ENCODE measurements at regions of chr18 and their contacts with region 1.

Region 1: GRCh38 chr18:58493516-58494253 is 135.2 kb downstream of the ALPK2 start:
- DNase-seq: peak; percentile 48 to 83 (median 58)
- ATAC-seq: peak; percentile 96
- H3K4me3 ChIP-seq: no peak overlapping the region
- H3K4me3 Mint-ChIP-seq: no peak overlapping the region
- H3K27ac ChIP-seq: no peak overlapping the region
- H3K27ac Mint-ChIP-seq: no peak overlapping the region
- H3K4me1 ChIP-seq: peaks cover 6% of the 10 kb centered on the region
- H3K4me1 Mint-ChIP-seq: peaks cover 7% of the 10 kb centered on the region
- H3K27me3 ChIP-seq: peaks cover 2 to 6% of the 10 kb centered on the region in 2 experiments
- H3K27me3 Mint-ChIP-seq: peaks cover 38% of the 10 kb centered on the region
- CTCF ChIP-seq: peak; percentile 86

Region 2: DNA sequence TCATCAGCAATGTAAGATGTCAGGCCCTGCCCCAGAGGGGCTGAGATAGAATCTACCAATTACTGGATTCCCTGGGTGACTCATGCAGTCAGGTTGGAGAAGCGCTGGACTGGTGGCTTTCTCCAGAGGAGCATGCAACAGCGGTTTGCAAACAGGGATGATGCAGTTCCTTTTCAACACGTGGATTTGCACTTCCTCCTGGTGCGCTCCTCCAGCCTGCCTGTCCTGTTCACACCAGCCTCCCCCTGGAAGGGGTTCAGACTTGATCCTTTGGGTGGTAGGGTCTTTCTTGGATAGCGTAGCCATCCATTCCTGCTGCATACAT is 291.3 kb before region 1 on chr18:
- CTCF ChIA-PET with region 1: no interaction called
- POLR2A ChIA-PET with region 1: no interaction called
- intact Hi-C with region 1: loop called in 1 of 2 experiments (anchors 10 kb)
- DNase-seq: no peak
- ATAC-seq: no peak
- H3K4me3 ChIP-seq: no peak overlapping the region
- H3K4me3 Mint-ChIP-seq: no peak overlapping the region
- H3K27ac ChIP-seq: no peak overlapping the region
- H3K27ac Mint-ChIP-seq: no peak overlapping the region
- H3K4me1 ChIP-seq: no peaks in the 10 kb centered on the region
- H3K4me1 Mint-ChIP-seq: no peaks in the 10 kb centered on the region
- H3K27me3 ChIP-seq: no peaks in the 10 kb centered on the region
- H3K27me3 Mint-ChIP-seq: peaks cover 6% of the 10 kb centered on the region
- CTCF ChIP-seq: no peak

Region 3: DNA sequence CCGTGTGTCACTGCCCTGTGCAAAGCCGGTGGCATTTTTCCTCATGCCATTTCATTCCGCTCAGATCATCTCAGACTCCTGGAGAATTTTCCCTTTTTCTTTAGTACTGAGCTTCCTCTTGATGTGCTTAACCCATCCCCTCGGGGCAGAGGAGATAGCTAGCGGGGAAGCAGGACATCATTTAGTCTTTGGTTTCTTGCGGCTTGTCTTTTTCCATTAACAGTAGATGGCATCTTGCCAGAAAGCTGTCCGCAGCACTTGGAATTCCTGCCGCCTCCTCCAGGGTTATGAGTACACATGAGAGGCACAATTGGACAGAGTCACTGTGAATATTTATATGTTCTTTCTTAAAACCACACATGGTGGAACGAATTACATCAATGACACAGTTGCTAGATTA is 91.4 kb before region 1 on chr18:
- CTCF ChIA-PET with region 1: no interaction called
- POLR2A ChIA-PET with region 1: interaction called, 3 read pairs
- intact Hi-C with region 1: loop called (anchors 2 to 5 kb)
- DNase-seq: no peak
- ATAC-seq: no peak
- H3K4me3 ChIP-seq: no peak overlapping the region
- H3K4me3 Mint-ChIP-seq: no peak overlapping the region
- H3K27ac ChIP-seq: no peak overlapping the region
- H3K27ac Mint-ChIP-seq: no peak overlapping the region
- H3K4me1 ChIP-seq: peaks cover 13% of the 10 kb centered on the region
- H3K4me1 Mint-ChIP-seq: peaks cover 18% of the 10 kb centered on the region
- H3K27me3 ChIP-seq: no peaks in the 10 kb centered on the region
- H3K27me3 Mint-ChIP-seq: no peaks in the 10 kb centered on the region
- CTCF ChIP-seq: no peak

Region 4: GRCh38 chr18:60277855-60278480 is 1784.3 kb after region 1 on chr18:
- CTCF ChIA-PET with region 1: no interaction called
- POLR2A ChIA-PET with region 1: no interaction called
- intact Hi-C with region 1: no loop called
- DNase-seq: no peak
- ATAC-seq: no peak
- H3K4me3 ChIP-seq: no peak overlapping the region
- H3K4me3 Mint-ChIP-seq: no peak overlapping the region
- H3K27ac ChIP-seq: no peak overlapping the region
- H3K27ac Mint-ChIP-seq: no peak overlapping the region
- H3K4me1 ChIP-seq: no peaks in the 10 kb centered on the region
- H3K4me1 Mint-ChIP-seq: no peaks in the 10 kb centered on the region
- H3K27me3 ChIP-seq: no peaks in the 10 kb centered on the region
- H3K27me3 Mint-ChIP-seq: no peaks in the 10 kb centered on the region
- CTCF ChIP-seq: no peak

Measured in CD4-positive, alpha-beta T cell (primary cell).